ENCODE measurements at regions of chr10 and their contacts with region 1.

Region 1: GRCh38 chr10:63268798-63269503 is 135.8 kb downstream of the NRBF2 start:
- DNase-seq: peak; percentile 95
- H3K4me3 ChIP-seq: peak overlapping the region; percentile 82
- H3K27ac ChIP-seq: peak overlapping the region; percentile 94
- H3K4me1 ChIP-seq: peaks cover 35% of the 10 kb centered on the region
- CTCF ChIP-seq: peak; percentile 55

Region 2: GRCh38 chr10:62528441-62528840 is 740.5 kb before region 1 on chr10:
- CTCF ChIA-PET with region 1: no interaction called
- POLR2A ChIA-PET with region 1: no interaction called
- intact Hi-C with region 1: loop called (anchors 5 kb)
- DNase-seq: peak; percentile 90
- H3K4me3 ChIP-seq: peak overlapping the region; percentile 51
- H3K27ac ChIP-seq: peak overlapping the region; percentile 96
- H3K4me1 ChIP-seq: peaks cover 56% of the 10 kb centered on the region
- CTCF ChIP-seq: no peak

Region 3: DNA sequence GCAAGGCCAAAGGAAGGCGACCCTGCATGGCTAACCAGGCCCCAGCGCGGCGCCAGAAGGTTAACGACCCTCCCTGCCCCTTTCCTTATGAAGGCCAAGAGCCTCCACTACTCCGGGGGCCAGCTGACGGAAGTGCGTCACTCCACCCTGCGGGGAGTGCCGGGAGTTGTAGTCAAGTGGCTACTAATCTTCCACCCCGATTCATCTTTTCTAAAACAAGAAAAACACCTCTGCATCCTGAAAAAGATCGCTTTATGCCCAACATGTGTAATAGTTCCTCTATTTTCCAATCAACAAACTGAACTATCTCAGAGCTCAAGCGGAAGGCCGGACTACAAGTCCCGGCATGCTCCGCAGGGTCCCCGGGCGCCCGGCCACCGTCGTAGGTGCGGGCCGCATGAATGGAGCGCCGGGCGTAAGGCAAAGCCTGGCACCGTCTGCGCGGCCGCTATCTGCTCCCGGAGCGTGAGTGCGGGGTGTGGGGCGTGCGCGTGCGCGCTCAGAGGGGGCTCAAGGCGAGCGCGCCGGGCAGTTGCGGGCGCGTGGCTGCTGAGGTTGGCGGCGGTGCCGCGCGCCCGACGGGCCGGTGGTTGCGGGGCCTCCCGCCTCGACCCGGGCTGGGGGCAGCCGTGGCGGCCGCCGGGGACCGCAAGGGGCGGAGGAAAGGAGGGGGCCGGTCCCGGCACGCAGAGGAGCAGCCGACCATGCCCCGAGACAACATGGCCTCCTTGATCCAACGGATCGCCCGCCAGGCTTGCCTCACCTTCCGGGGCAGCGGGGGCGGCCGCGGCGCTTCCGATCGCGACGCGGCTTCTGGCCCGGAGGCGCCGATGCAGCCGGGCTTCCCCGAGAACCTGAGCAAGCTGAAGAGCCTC is 464.4 kb before region 1 on chr10 and contains the start of gene ADO:
- CTCF ChIA-PET with region 1: no interaction called
- POLR2A ChIA-PET with region 1: no interaction called
- intact Hi-C with region 1: loop called (anchors 10 kb)
- DNase-seq: peak; percentile 89
- H3K4me3 ChIP-seq: peak within 1 kb of the TSS; percentile 88
- H3K27ac ChIP-seq: peak within 1 kb of the TSS; percentile 66
- H3K4me1 ChIP-seq: peaks cover 39% of the 10 kb centered on the region
- CTCF ChIP-seq: no peak
- total RNA-seq, gene ADO: 33.1 and 43.1 TPM in 2 replicates

Region 4: DNA sequence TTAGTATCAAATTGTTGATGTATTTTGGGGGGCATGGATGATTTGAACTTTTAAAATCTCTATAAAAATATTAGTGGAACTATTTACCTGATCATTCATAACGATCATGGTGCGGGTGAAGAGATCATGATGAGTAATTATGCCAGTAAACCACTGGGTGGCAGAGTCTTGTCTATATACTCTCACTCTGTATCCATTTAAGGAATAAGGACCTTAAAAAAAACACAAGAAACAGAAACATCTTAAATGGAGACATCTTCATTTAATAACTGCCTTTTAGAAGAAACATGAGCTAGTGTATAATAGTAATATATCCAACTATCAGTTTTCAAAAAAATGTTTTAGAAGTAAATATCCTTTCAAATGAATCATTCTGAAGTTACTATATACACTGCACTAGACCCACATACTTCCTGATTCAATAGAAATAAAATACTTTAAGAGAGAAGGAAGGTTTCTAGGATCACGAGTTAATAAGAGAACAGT is 51.8 kb before region 1 on chr10:
- CTCF ChIA-PET with region 1: interaction called, 4 read pairs
- POLR2A ChIA-PET with region 1: interaction called, 9 read pairs
- intact Hi-C with region 1: loop called (anchors 1 kb)
- DNase-seq: peak; percentile 73
- H3K4me3 ChIP-seq: no peak overlapping the region
- H3K27ac ChIP-seq: no peak overlapping the region
- H3K4me1 ChIP-seq: peaks cover 44% of the 10 kb centered on the region
- CTCF ChIP-seq: peak; percentile 93

Region 5: DNA sequence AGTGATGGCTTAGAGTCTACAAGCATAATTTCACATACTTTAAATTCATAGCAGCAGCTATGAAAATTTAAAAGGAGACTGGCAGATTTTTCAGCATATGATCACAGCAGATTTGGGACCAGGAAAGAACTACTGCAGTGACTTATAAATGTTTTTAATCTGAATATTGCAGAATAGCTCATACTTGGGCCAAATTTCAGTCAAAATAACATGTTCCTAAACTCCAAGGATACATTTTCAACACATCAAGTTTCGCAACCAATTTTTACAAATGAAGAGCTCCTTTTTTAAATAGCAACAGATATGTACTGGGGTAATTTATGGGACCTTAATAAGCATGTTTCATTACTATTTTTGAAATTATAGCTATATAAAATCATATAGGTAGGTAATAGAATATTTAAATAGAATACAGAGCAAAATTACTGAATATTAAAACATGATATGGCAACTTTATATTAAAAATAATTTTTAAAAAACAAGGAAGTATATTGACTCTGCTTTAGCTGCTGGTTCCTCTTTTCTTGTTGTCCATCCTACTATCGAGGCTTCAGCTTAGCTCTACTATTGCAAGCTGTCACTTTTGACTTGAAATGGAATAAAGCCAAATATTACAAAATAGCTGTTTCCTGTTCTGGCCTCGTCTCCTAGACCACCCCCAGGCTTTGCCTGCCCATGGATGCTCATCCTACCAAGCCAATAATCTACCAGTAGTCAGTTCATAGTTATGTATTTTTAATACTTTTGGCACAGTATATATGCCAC is 12.8 kb before region 1 on chr10:
- CTCF ChIA-PET with region 1: no interaction called
- POLR2A ChIA-PET with region 1: interaction called, 89 read pairs
- intact Hi-C with region 1: no loop called
- DNase-seq: peak; percentile 60
- H3K4me3 ChIP-seq: peak overlapping the region; percentile 32
- H3K27ac ChIP-seq: peak overlapping the region; percentile 36
- H3K4me1 ChIP-seq: peaks cover 73% of the 10 kb centered on the region
- CTCF ChIP-seq: no peak

Region 6: GRCh38 chr10:63346015-63346441 is 77.1 kb after region 1 on chr10:
- CTCF ChIA-PET with region 1: no interaction called
- POLR2A ChIA-PET with region 1: no interaction called
- intact Hi-C with region 1: no loop called
- DNase-seq: no peak
- H3K4me3 ChIP-seq: no peak overlapping the region
- H3K27ac ChIP-seq: no peak overlapping the region
- H3K4me1 ChIP-seq: no peaks in the 10 kb centered on the region
- CTCF ChIP-seq: no peak

Region 7: GRCh38 chr10:63629363-63630084 is 360.6 kb after region 1 on chr10:
- CTCF ChIA-PET with region 1: no interaction called
- POLR2A ChIA-PET with region 1: interaction called, 10 read pairs
- intact Hi-C with region 1: loop called (anchors 2 kb)
- DNase-seq: peak; percentile 91
- H3K4me3 ChIP-seq: peak overlapping the region; percentile 71
- H3K27ac ChIP-seq: peak overlapping the region; percentile 80
- H3K4me1 ChIP-seq: peaks cover 27% of the 10 kb centered on the region
- CTCF ChIP-seq: peak; percentile 98

Measured in OCI-LY7 (cell line).